ENCODE measurements at regions of chr1 and their contacts with region 1.

Region 1: GRCh38 chr1:224434691-224435317 is at the start of gene WDR26:
- DNase-seq: peak; percentile 62 to 93 (median 74)
- ATAC-seq: peak; percentile 82
- H3K4me3 ChIP-seq: peak within 1 kb of the TSS; percentile 84
- H3K4me3 Mint-ChIP-seq: peak within 1 kb of the TSS; percentile 99
- H3K27ac ChIP-seq: peak within 1 kb of the TSS; percentile 91 to 95
- H3K27ac Mint-ChIP-seq: peak within 1 kb of the TSS; percentile 100
- H3K4me1 ChIP-seq: peaks cover 29% of the 10 kb centered on the region
- H3K4me1 Mint-ChIP-seq: peaks cover 58% of the 10 kb centered on the region
- H3K27me3 ChIP-seq: no peaks in the 10 kb centered on the region
- H3K27me3 Mint-ChIP-seq: no peaks in the 10 kb centered on the region
- CTCF ChIP-seq: no peak
- total RNA-seq, gene WDR26: 173 to 176 TPM

Region 2: GRCh38 chr1:223845810-223846682 is 588.8 kb before region 1 on chr1 and contains the start of gene TP53BP2:
- CTCF ChIA-PET with region 1: no interaction called
- POLR2A ChIA-PET with region 1: interaction called, 5 read pairs
- intact Hi-C with region 1: loop called in 1 of 2 experiments (anchors 10 kb)
- DNase-seq: peak; percentile 68 to 94 (median 83)
- ATAC-seq: peak; percentile 82
- H3K4me3 ChIP-seq: peak within 1 kb of the TSS; percentile 74
- H3K4me3 Mint-ChIP-seq: peak within 1 kb of the TSS; percentile 99
- H3K27ac ChIP-seq: peak within 1 kb of the TSS; percentile 84 to 93
- H3K27ac Mint-ChIP-seq: peak within 1 kb of the TSS; percentile 100
- H3K4me1 ChIP-seq: peaks cover 30% of the 10 kb centered on the region
- H3K4me1 Mint-ChIP-seq: peaks cover 43% of the 10 kb centered on the region
- H3K27me3 ChIP-seq: no peaks in the 10 kb centered on the region
- H3K27me3 Mint-ChIP-seq: no peaks in the 10 kb centered on the region
- CTCF ChIP-seq: peak; percentile 61
- total RNA-seq, gene TP53BP2: 104 to 119 TPM

Region 3: GRCh38 chr1:224182866-224183590 is 251.8 kb before region 1 on chr1 and contains the start of gene DEGS1:
- CTCF ChIA-PET with region 1: no interaction called
- POLR2A ChIA-PET with region 1: interaction called, 12 read pairs
- intact Hi-C with region 1: loop called in 1 of 2 experiments (anchors 5 kb)
- DNase-seq: peak; percentile 75 to 94 (median 80)
- ATAC-seq: peak; percentile 75
- H3K4me3 ChIP-seq: peak within 1 kb of the TSS; percentile 92
- H3K4me3 Mint-ChIP-seq: peak within 1 kb of the TSS; percentile 96
- H3K27ac ChIP-seq: peak within 1 kb of the TSS; percentile 93 to 97
- H3K27ac Mint-ChIP-seq: peak within 1 kb of the TSS; percentile 94
- H3K4me1 ChIP-seq: peaks cover 52% of the 10 kb centered on the region
- H3K4me1 Mint-ChIP-seq: peaks cover 53% of the 10 kb centered on the region
- H3K27me3 ChIP-seq: no peaks in the 10 kb centered on the region
- H3K27me3 Mint-ChIP-seq: no peaks in the 10 kb centered on the region
- CTCF ChIP-seq: no peak
- total RNA-seq, gene DEGS1: 54.0 to 59.1 TPM

Region 4: DNA sequence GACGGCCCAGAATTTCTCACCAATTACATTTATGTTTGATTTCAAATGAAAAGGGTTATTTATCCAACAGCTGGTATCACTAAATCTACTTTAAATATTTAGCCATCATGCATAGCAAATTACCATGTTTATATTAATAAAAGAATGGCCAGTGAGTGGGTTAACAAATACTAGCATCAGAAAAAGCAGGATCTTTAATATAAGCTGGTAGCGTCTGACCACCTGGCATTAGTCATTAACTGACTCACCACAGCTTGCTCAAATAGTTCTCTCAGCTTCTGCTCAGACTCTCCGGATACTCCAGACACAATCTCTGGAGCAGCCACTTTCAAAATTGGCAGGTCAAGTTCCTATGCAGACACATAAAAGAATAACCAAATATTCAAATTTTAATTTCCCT is 134.5 kb before region 1 on chr1:
- CTCF ChIA-PET with region 1: no interaction called
- POLR2A ChIA-PET with region 1: no interaction called
- intact Hi-C with region 1: no loop called
- DNase-seq: no peak
- ATAC-seq: no peak
- H3K4me3 ChIP-seq: no peak overlapping the region
- H3K4me3 Mint-ChIP-seq: no peak overlapping the region
- H3K27ac ChIP-seq: no peak overlapping the region
- H3K27ac Mint-ChIP-seq: no peak overlapping the region
- H3K4me1 ChIP-seq: no peaks in the 10 kb centered on the region
- H3K4me1 Mint-ChIP-seq: no peaks in the 10 kb centered on the region
- H3K27me3 ChIP-seq: no peaks in the 10 kb centered on the region
- H3K27me3 Mint-ChIP-seq: no peaks in the 10 kb centered on the region
- CTCF ChIP-seq: no peak

Region 5: DNA sequence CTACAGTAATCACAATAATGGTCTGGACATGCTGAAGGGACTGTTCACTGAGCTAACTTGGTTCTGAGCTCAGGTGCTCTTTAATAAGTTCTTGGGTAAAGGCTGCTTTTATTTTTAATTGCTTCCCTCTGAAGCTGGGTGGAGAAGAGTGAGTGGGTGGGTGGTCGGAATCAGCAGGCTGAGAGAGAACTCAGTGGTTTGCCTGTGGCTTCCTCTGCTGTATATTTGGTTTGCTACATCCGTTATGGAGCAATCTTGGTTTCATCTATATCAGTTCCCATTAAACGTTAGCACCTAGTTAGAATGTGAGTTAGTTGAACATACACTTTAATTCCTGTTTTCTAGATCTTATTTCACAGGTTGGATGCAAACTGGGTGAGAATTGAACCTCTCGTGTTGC is 54.8 kb before region 1 on chr1:
- CTCF ChIA-PET with region 1: no interaction called
- POLR2A ChIA-PET with region 1: interaction called, 11 read pairs
- intact Hi-C with region 1: no loop called
- DNase-seq: peak in 8 of 14 experiments; percentile 17 to 83 (median 43)
- ATAC-seq: peak; percentile 87
- H3K4me3 ChIP-seq: peak overlapping the region; percentile 13
- H3K4me3 Mint-ChIP-seq: peak overlapping the region; percentile 83
- H3K27ac ChIP-seq: peak overlapping the region in 1 of 2 donors; percentile 12
- H3K27ac Mint-ChIP-seq: peak overlapping the region; percentile 75
- H3K4me1 ChIP-seq: peaks cover 53% of the 10 kb centered on the region
- H3K4me1 Mint-ChIP-seq: peaks cover 80% of the 10 kb centered on the region
- H3K27me3 ChIP-seq: no peaks in the 10 kb centered on the region
- H3K27me3 Mint-ChIP-seq: no peaks in the 10 kb centered on the region
- CTCF ChIP-seq: no peak

Region 6: GRCh38 chr1:224454397-224455066 is 19.7 kb after region 1 on chr1:
- CTCF ChIA-PET with region 1: interaction called, 13 read pairs
- POLR2A ChIA-PET with region 1: interaction called, 17 read pairs
- intact Hi-C with region 1: loop called (anchors 2 kb)
- DNase-seq: no peak
- ATAC-seq: no peak
- H3K4me3 ChIP-seq: no peak overlapping the region
- H3K4me3 Mint-ChIP-seq: no peak overlapping the region
- H3K27ac ChIP-seq: no peak overlapping the region
- H3K27ac Mint-ChIP-seq: no peak overlapping the region
- H3K4me1 ChIP-seq: peaks cover 9% of the 10 kb centered on the region
- H3K4me1 Mint-ChIP-seq: peaks cover 16% of the 10 kb centered on the region
- H3K27me3 ChIP-seq: no peaks in the 10 kb centered on the region
- H3K27me3 Mint-ChIP-seq: no peaks in the 10 kb centered on the region
- CTCF ChIP-seq: no peak

Measured in CD4-positive, alpha-beta T cell (primary cell).